Activated naive CD4-positive, alpha-beta T cell treated with anti-CD3 and anti-CD28 coated beads for 36 hours (primary cell): ENCODE measurements at regions of chr22 and their contacts with region 1.

Region 1: DNA sequence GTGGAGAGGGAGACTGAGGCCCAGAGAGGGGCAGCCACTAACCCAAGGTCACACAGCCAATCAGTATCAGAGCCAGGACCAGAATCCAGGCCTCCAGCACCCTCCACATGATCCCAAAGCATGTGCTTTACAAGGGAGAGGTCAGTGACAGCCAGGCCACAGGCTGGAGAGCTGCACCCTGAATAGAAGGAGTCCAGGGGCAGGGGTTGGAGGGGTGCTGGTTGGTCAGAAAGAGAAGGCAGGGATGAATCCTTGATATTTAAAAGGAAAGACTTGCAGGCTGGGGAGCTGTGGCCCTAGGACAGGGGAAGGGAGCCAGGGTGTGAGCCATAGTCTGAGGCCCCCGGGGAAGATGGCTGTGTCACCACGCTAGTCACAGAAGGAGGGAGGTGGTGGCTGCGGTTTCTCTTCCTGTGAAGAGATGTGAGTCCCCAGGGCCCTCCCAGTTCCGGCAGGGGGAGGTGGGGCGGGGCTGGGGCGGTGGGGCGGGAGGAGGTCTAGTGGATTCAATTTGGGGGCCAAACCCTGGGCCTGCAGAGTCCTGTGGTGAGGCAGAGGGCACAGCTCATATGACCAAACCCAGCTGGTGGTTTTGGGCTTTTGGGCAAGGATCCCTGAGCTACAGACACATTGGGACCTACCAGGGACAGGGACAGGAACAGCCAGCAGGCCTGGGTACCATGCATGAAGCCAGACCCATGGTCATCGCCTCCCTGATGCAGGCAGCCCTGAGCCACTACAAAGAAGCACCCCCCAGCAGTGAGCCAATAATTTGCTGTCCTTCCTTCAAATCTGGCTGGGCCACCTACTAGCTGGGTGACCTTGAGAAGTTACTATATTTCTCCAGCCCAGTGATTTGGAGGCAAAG is 14.0 kb downstream of the RAC2 start:
- DNase-seq: peak; percentile 98
- H3K4me3 Mint-ChIP-seq: peak overlapping the region; percentile 67
- H3K27ac Mint-ChIP-seq: peak overlapping the region; percentile 98
- H3K4me1 Mint-ChIP-seq: peaks cover 90% of the 10 kb centered on the region
- H3K27me3 Mint-ChIP-seq: no peaks in the 10 kb centered on the region

Region 2: DNA sequence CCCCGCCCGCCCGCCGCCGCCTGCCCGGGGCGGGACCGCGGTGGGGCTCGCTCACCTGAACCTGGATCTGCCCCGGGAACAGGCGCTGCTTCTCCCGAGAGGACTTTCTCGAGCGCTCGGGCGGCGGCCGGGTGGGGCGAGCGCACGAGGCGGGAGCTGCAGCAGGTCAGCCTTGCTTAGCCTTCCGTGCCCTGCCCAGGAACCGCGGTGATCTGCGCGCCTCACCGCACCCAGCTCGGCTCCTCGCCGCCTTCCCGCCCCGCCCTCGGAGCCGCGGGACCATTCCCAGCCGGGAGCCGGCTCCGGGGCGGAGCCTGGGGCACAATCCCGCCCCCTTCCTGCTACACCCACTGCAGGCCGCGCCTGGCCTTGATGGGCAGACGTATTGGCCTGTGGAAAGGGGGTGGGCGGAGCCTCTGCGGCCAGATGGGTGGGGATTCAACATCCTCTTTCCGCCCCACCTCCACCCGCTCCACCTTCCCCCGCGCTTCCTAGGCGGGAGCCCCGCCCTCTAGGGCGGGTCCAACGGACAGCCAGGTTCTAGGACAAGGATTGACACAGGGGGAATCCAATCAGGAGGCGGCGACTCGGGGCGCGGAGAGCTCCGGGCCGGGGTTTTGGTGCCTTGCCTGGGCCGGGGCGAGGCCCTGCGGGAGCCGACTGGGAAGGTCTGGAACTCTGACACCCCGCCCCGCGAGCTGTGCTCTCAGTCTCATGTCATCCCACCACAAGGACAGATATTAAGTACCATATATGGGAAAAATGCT is 842.1 kb before region 1 on chr22 and contains the start of gene MYH9:
- CTCF ChIA-PET with region 1: no interaction called
- intact Hi-C with region 1: loop called (anchors 10 kb)
- DNase-seq: peak; percentile 100
- H3K4me3 Mint-ChIP-seq: peak within 1 kb of the TSS; percentile 83
- H3K27ac Mint-ChIP-seq: peak within 1 kb of the TSS; percentile 96
- H3K4me1 Mint-ChIP-seq: peaks cover 25% of the 10 kb centered on the region
- H3K27me3 Mint-ChIP-seq: no peaks in the 10 kb centered on the region
- total RNA-seq, gene MYH9: 574 to 625 TPM

Region 3: DNA sequence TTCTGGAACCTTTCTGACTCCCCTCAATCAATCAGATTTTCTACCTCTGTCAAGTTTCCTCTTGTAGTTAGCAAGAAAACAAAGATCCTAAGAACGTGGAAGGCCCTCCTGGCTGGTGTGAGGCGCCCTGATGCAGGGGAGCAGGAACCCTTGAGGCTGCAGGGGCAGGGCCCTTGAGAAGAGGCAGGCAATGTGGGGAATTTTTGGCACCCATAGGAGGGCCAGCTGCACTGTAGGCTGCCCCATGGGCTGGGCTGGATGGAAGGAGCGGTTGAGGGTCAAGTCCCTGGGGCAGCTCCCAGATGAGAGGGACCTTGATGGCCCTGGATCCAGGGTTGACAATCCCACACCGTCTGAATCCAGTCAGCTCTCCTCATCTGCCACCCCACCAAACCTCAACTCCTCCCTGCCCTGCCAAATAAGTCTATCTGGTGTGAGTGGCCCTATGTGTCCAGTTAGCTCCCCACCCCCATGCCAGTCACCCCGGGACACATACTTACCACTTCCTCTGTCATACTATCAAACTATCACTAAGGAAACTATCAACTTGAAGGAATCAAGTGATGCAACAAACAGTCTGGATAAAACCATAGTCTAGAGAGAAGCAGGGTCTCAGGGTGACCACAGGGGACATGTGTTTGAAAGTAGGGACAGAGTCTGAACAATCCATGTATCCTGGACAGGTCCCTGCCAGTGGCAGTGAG is 330.0 kb before region 1 on chr22:
- CTCF ChIA-PET with region 1: no interaction called
- intact Hi-C with region 1: no loop called
- DNase-seq: no peak
- H3K4me3 Mint-ChIP-seq: no peak overlapping the region
- H3K27ac Mint-ChIP-seq: no peak overlapping the region
- H3K4me1 Mint-ChIP-seq: no peaks in the 10 kb centered on the region
- H3K27me3 Mint-ChIP-seq: peaks cover 33% of the 10 kb centered on the region

Region 4: DNA sequence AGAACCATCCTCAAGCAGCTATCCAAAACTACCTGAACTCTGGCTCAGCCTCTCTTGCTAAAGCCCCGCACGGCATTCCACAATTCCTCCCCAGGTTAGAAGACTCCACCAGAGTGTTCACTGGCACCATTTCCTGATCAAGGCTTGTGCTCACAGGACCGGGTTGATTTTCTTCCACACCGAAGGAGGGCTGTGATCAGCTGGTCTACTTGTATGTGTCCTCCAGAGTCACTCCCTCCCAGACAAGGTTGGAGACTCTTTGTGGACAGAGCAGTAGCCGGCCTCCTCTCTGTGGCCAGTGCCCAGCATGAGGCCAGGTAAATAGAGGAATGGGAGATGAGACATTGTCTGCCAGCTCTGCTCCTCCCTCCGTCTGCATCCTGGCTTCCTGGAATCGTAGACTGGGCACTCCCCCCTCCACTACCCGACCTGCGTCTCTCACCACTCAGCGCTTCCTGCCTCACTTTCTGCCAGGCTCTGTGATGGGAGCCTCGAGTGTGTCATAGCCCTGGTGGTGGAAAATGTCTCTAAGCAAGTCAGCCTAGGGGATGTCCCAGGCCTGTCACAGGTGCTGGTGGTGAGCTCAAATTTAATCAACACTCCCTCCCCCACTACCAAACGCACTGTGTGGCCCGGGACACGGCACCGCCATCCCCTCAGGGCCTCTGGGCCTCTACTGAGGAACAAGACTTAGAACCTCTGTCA is 108.0 kb before region 1 on chr22:
- CTCF ChIA-PET with region 1: no interaction called
- intact Hi-C with region 1: loop called (anchors 1 kb)
- DNase-seq: peak; percentile 98
- H3K4me3 Mint-ChIP-seq: peak overlapping the region; percentile 85
- H3K27ac Mint-ChIP-seq: peak overlapping the region; percentile 99
- H3K4me1 Mint-ChIP-seq: peaks cover 73% of the 10 kb centered on the region
- H3K27me3 Mint-ChIP-seq: no peaks in the 10 kb centered on the region

Region 5: GRCh38 chr22:37166675-37167066 is 63.4 kb before region 1 on chr22:
- CTCF ChIA-PET with region 1: interaction called, 4 read pairs
- intact Hi-C with region 1: loop called (anchors 2 kb)
- DNase-seq: peak; percentile 94
- H3K4me3 Mint-ChIP-seq: peak overlapping the region; percentile 66
- H3K27ac Mint-ChIP-seq: peak overlapping the region; percentile 79
- H3K4me1 Mint-ChIP-seq: peaks cover 77% of the 10 kb centered on the region
- H3K27me3 Mint-ChIP-seq: no peaks in the 10 kb centered on the region

Region 6: GRCh38 chr22:37244114-37244921 is 14.3 kb after region 1 on chr22 and contains the start of gene RAC2:
- CTCF ChIA-PET with region 1: interaction called, 30 read pairs
- intact Hi-C with region 1: loop called (anchors 1 kb)
- DNase-seq: peak; percentile 94
- H3K4me3 Mint-ChIP-seq: peak within 1 kb of the TSS; percentile 99
- H3K27ac Mint-ChIP-seq: peak within 1 kb of the TSS; percentile 99
- H3K4me1 Mint-ChIP-seq: peaks cover 38% of the 10 kb centered on the region
- H3K27me3 Mint-ChIP-seq: no peaks in the 10 kb centered on the region
- total RNA-seq, gene RAC2: 728 to 759 TPM

Region 7: DNA sequence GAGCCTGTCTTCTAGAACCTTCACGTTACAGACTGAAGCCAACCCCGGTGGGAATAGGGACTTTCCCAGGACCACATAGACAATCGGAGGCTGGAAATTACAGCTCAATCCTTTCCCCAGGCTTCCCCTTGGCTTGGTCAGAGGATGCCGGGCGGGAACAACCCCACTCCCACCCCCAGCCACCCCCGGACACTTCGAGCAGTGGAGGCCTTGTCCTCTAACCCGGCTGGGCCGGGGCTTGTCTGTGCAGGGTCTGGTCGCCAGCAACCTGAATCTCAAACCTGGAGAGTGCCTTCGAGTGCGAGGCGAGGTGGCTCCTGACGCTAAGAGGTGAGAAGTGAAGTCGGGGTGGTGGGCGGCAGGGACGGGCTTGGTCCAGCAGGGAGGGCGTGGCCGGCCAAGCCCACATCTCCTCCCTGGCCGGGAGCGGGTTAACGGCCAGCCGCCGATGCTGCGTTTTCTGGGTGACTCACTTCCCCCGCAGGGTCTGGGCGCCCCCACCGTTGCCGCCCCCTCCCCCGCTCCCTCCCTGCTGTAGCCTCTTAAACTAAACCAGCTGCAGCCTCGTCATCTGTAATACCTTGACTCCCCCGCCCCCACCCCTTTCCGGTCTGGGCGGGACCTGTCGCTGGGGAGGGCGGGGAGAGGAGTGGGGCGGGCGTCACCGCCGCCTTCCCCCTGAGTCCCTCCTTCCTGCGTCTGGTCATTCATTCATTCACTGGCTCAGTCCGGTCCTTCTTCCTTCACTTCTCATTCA is 446.9 kb after region 1 on chr22:
- CTCF ChIA-PET with region 1: no interaction called
- intact Hi-C with region 1: loop called (anchors 10 kb)
- DNase-seq: peak; percentile 97
- H3K4me3 Mint-ChIP-seq: peak overlapping the region; percentile 83
- H3K27ac Mint-ChIP-seq: peak overlapping the region; percentile 95
- H3K4me1 Mint-ChIP-seq: peaks cover 56% of the 10 kb centered on the region
- H3K27me3 Mint-ChIP-seq: no peaks in the 10 kb centered on the region